ENCODE measurements at regions of chrX and their contacts with region 1.

Region 1: GRCh38 chrX:114959729-114960128 is 57.7 kb downstream of the IL13RA2 start:
- DNase-seq: peak in 1 of 2 experiments; percentile 40
- H3K4me3 ChIP-seq: no peak overlapping the region
- H3K27ac ChIP-seq: no peak overlapping the region
- H3K4me1 ChIP-seq: no peaks in the 10 kb centered on the region
- H3K27me3 ChIP-seq: no peaks in the 10 kb centered on the region
- CTCF ChIP-seq: peak; percentile 83

Region 2: GRCh38 chrX:114626323-114626722 is 333.4 kb before region 1 on chrX:
- CTCF ChIA-PET with region 1: interaction called, 5 read pairs
- POLR2A ChIA-PET with region 1: no interaction called
- intact Hi-C with region 1: loop called (anchors 5 kb)
- DNase-seq: no peak
- H3K4me3 ChIP-seq: no peak overlapping the region
- H3K27ac ChIP-seq: no peak overlapping the region
- H3K4me1 ChIP-seq: no peaks in the 10 kb centered on the region
- H3K27me3 ChIP-seq: no peaks in the 10 kb centered on the region
- CTCF ChIP-seq: peak; percentile 74

Measured in PC-9 (cell line).